ENCODE measurements at regions of chr3 and their contacts with region 1.

Region 1: GRCh38 chr3:45567730-45568172 is 26.8 kb upstream of the LIMD1 start:
- DNase-seq: no peak
- H3K4me3 ChIP-seq: no peak overlapping the region
- H3K27me3 ChIP-seq: no peaks in the 10 kb centered on the region; the same call in 1 of the 2 replicates
- CTCF ChIP-seq: no peak

Region 2: DNA sequence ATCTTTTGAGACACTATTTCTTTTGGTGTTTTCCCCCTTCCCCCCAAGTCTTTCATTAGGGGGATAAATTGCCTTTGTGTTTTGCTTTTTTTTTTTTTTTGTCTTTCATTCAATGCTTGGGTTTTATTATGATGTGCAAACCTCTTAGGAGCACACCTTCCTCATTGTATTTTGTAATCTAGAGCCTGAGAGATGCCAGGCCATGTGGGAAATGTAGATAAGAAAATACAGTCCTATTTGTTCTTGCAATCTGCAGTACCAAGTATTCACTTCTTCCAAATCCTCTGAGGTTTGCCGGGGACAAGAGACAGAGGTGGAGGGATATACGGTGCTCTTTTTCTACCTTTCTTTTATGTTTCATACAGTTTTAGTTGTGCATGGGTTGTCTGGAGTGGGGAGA is 112.7 kb before region 1 on chr3:
- CTCF ChIA-PET with region 1: no interaction called
- POLR2A ChIA-PET with region 1: no interaction called
- DNase-seq: no peak
- H3K4me3 ChIP-seq: no peak overlapping the region
- H3K27me3 ChIP-seq: no peaks in the 10 kb centered on the region
- CTCF ChIP-seq: no peak

Region 3: GRCh38 chr3:45677033-45677433 is 109.3 kb after region 1 on chr3:
- CTCF ChIA-PET with region 1: no interaction called
- POLR2A ChIA-PET with region 1: interaction called, 10 read pairs
- DNase-seq: peak; percentile 70
- H3K4me3 ChIP-seq: no peak overlapping the region
- H3K27me3 ChIP-seq: no peaks in the 10 kb centered on the region
- CTCF ChIP-seq: no peak